Activated CD4-positive, alpha-beta memory T cell treated with anti-CD3 and anti-CD28 coated beads, Interleukin-2, amount 10 ng/mL, durations not matched to agents 7 days and 5 days (primary cell): ENCODE measurements at regions of chr15 and their contacts with region 1.

Region 1: DNA sequence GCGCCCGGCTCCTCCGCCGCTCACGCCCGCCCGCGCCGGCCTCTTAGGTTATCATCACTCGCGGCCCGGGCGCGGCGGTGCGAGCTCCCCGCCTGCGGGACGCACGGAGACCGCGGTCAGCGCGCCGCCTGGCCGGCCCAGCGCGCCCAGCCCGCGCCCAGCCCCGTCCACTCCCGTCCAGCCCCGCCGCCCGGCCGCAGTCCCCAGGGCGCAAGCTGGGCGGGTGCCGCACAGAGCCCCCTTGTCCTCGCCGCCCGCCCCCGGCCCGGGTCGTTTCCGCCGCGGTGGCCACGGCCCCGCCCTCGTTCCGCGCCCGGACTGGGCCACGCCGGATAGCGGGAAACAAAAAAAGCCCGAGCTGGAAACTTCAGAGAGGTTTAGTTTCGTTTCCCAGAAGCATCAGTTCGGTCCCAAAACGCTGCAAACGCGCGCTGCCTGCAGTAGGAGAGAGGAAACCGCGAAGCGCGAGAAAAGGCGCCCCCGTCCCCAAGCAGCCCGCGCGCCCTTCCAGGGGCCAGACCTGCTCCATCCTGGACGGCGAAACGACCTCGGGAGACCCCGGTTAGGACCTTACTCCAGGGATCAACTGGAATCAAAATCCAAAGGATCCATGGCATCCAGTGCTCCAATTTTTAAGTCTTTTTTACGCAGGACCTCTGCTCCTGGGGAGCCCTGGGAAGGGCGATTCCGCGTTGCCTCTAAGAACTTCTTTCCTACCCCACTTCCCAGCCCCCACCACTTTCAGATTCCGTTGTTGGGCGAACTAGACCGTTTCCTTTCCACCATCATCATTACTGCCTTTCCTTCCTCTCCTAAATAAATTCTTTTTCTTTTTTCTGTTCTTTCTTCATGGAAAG is at the start of gene ATP10A:
- DNase-seq: peak; percentile 70
- H3K4me3 Mint-ChIP-seq: peak within 1 kb of the TSS; percentile 93
- H3K27ac Mint-ChIP-seq: peak within 1 kb of the TSS; percentile 85
- H3K4me1 Mint-ChIP-seq: peaks cover 34% of the 10 kb centered on the region
- H3K27me3 Mint-ChIP-seq: peaks cover 12% of the 10 kb centered on the region
- total RNA-seq, gene ATP10A: 35.8 to 36.5 TPM

Region 2: GRCh38 chr15:25811481-25811906 is 51.8 kb before region 1 on chr15:
- CTCF ChIA-PET with region 1: no interaction called
- POLR2A ChIA-PET with region 1: interaction called, 25 read pairs
- DNase-seq: peak; percentile 46
- H3K4me3 Mint-ChIP-seq: peak overlapping the region; percentile 8
- H3K27ac Mint-ChIP-seq: peak overlapping the region; percentile 48
- H3K4me1 Mint-ChIP-seq: peaks cover 57% of the 10 kb centered on the region
- H3K27me3 Mint-ChIP-seq: no peaks in the 10 kb centered on the region

Region 3: GRCh38 chr15:25850154-25851111 is 12.9 kb before region 1 on chr15:
- CTCF ChIA-PET with region 1: interaction called, 7 read pairs
- POLR2A ChIA-PET with region 1: interaction called, 124 read pairs
- DNase-seq: peak; percentile 74
- H3K4me3 Mint-ChIP-seq: peak overlapping the region; percentile 86
- H3K27ac Mint-ChIP-seq: peak overlapping the region; percentile 99
- H3K4me1 Mint-ChIP-seq: peaks cover 86% of the 10 kb centered on the region
- H3K27me3 Mint-ChIP-seq: peaks cover 2% of the 10 kb centered on the region